ENCODE measurements at regions of chr6 and their contacts with region 1.

Region 1: DNA sequence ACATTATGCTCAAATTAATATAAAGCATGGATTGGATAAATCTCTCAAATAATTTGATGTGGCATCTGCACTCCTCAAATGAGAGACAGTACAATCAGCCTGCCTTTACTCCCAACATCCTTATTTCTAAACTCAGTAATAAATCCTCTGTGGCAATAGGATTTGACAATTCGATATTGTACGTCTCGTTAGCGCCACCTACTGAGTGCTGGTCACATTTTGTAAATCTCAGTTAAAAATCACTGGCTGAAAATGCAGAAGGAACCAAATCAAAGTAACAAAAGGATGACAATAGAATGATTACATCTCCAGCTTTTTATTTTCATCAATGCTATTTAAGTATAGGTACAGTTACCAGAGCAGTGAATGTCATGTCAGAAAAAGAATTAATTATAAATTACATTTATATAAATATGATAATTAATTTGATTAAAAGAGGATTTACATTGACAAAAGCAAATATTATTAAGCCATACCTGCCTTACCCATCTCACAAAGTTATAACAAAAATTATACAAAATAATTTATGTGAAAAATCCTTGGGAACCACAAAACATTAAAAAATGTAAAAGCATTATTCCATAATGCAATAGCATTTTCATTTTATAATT is 20.2 kb upstream of the GJE1 start:
- DNase-seq: peak in 1 of 2 donors; percentile 78
- ATAC-seq: peak; percentile 34 to 52 (median 48)
- H3K4me3 ChIP-seq: no peak overlapping the region
- H3K4me3 Mint-ChIP-seq: no peak overlapping the region
- H3K27ac ChIP-seq: no peak overlapping the region
- H3K27ac Mint-ChIP-seq: no peak overlapping the region
- H3K4me1 ChIP-seq: no peaks in the 10 kb centered on the region
- H3K4me1 Mint-ChIP-seq: no peaks in the 10 kb centered on the region
- H3K27me3 ChIP-seq: peaks cover 3% of the 10 kb centered on the region
- H3K27me3 Mint-ChIP-seq: no peaks in the 10 kb centered on the region
- CTCF ChIP-seq: peak; percentile 80

Region 2: GRCh38 chr6:141677598-141678211 is 434.9 kb before region 1 on chr6:
- intact Hi-C with region 1: loop called (anchors 2 kb)
- DNase-seq: peak in 1 of 2 donors; percentile 45
- ATAC-seq: no peak
- H3K4me3 ChIP-seq: no peak overlapping the region
- H3K4me3 Mint-ChIP-seq: no peak overlapping the region
- H3K27ac ChIP-seq: no peak overlapping the region
- H3K27ac Mint-ChIP-seq: no peak overlapping the region
- H3K4me1 ChIP-seq: no peaks in the 10 kb centered on the region
- H3K4me1 Mint-ChIP-seq: no peaks in the 10 kb centered on the region
- H3K27me3 ChIP-seq: no peaks in the 10 kb centered on the region
- H3K27me3 Mint-ChIP-seq: no peaks in the 10 kb centered on the region
- CTCF ChIP-seq: peak; percentile 41

Region 3: GRCh38 chr6:142462267-142462666 is 349.7 kb after region 1 on chr6:
- intact Hi-C with region 1: no loop called
- DNase-seq: no peak
- ATAC-seq: no peak
- H3K4me3 ChIP-seq: no peak overlapping the region
- H3K4me3 Mint-ChIP-seq: no peak overlapping the region
- H3K27ac ChIP-seq: no peak overlapping the region
- H3K27ac Mint-ChIP-seq: no peak overlapping the region
- H3K4me1 ChIP-seq: no peaks in the 10 kb centered on the region
- H3K4me1 Mint-ChIP-seq: no peaks in the 10 kb centered on the region
- H3K27me3 ChIP-seq: no peaks in the 10 kb centered on the region
- H3K27me3 Mint-ChIP-seq: peaks cover 3 to 6% of the 10 kb centered on the region in 2 donors
- CTCF ChIP-seq: no peak